GM12878 (cell line): ENCODE measurements at regions of chr11 and their contacts with region 1.

Region 1: GRCh38 chr11:4187055-4187988 is 92.7 kb downstream of the RRM1 start:
- DNase-seq: no peak
- ATAC-seq: peak; percentile 98
- H3K4me3 ChIP-seq: peak overlapping the region; percentile 64
- H3K27ac ChIP-seq: no peak overlapping the region
- H3K4me1 ChIP-seq: no peaks in the 10 kb centered on the region
- H3K27me3 ChIP-seq: no peaks in the 10 kb centered on the region; a peak in 1 of 4 replicates
- CTCF ChIP-seq: peak; percentile 72 to 91 (median 87)
- EP300 ChIP-seq: no peak
- POLR2A ChIP-seq: no peak
- RAD21 ChIP-seq: peak; percentile 88

Region 2: DNA sequence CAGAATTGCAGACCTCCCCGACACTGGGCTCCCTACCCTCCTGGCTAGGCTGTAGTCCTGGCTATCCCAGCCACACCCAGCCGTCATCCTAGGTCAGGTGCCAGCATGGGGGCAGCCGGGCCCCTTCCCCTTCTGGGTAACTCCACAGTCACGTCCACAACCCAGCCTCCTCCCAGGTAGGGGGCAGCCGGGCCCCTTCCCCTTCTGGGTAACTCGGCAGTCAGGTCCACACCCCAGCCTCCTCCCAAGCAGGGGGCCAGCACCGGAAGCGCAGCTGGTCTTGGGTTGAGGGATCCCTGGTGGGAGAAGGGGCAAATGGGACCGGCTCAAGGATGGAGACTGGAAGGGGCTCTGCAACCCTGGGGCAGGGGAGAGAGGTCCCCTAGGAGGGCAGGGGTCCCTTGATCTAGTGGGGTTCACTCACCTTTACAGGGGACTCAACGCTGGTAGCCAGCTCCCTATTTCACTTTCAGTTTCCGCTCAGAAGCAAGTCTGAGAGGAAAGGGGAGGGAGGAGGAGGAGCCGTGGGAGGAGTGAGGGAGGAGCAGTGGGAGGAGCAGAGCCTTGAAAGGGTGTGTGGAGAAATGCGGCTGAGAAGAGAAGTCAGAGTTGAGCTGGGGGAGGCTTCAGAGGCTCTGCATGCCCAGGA is 206.0 kb after region 1 on chr11 and contains the start of gene TRIM21:
- CTCF ChIA-PET with region 1: interaction called, 10 read pairs
- POLR2A ChIA-PET with region 1: no interaction called
- RAD21 ChIA-PET with region 1: interaction called, 6 read pairs
- SMC1A ChIA-PET with region 1: no interaction called
- in situ Hi-C with region 1: no loop called
- intact Hi-C with region 1: loop called (anchors 5 kb)
- DNase-seq: peak; percentile 72
- ATAC-seq: peak; percentile 99
- H3K4me3 ChIP-seq: peak within 1 kb of the TSS; percentile 87
- H3K27ac ChIP-seq: peak within 1 kb of the TSS; percentile 95
- H3K4me1 ChIP-seq: no peaks in the 10 kb centered on the region
- H3K27me3 ChIP-seq: no peaks in the 10 kb centered on the region
- CTCF ChIP-seq: no peak
- EP300 ChIP-seq: no peak
- POLR2A ChIP-seq: peak; percentile 82
- RAD21 ChIP-seq: no peak
- polyA plus RNA-seq, gene TRIM21: 24.7 to 28.6 TPM

Region 3: DNA sequence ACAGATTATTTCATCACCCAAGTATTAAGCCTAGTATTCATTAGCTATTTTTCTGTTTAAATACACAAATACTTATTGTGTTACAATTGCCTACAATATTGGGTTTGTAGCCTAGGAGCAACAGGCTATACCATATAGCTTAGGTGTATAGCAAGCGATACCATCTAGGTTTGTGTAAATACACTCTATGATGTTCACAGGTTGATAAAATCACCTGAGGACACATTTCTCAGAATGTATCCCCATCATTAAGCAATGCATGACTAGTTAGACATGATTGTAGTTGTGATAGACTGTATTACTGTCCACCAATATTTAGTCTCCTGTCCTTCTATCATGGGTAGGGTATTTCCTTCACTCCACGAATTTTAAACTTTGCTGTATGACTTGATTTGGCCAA is 303.5 kb after region 1 on chr11:
- CTCF ChIA-PET with region 1: interaction called, 91 read pairs
- POLR2A ChIA-PET with region 1: no interaction called
- RAD21 ChIA-PET with region 1: interaction called, 46 read pairs
- SMC1A ChIA-PET with region 1: interaction called, 30 read pairs
- in situ Hi-C with region 1: loop called (anchors 5 kb)
- intact Hi-C with region 1: loop called (anchors 1 kb)
- DNase-seq: no peak
- ATAC-seq: no peak
- H3K4me3 ChIP-seq: no peak overlapping the region
- H3K27ac ChIP-seq: no peak overlapping the region
- H3K4me1 ChIP-seq: no peaks in the 10 kb centered on the region; the same call in 1 of the 2 replicates
- H3K27me3 ChIP-seq: no peaks in the 10 kb centered on the region
- CTCF ChIP-seq: no peak
- EP300 ChIP-seq: no peak
- POLR2A ChIP-seq: no peak
- RAD21 ChIP-seq: no peak

Region 4: DNA sequence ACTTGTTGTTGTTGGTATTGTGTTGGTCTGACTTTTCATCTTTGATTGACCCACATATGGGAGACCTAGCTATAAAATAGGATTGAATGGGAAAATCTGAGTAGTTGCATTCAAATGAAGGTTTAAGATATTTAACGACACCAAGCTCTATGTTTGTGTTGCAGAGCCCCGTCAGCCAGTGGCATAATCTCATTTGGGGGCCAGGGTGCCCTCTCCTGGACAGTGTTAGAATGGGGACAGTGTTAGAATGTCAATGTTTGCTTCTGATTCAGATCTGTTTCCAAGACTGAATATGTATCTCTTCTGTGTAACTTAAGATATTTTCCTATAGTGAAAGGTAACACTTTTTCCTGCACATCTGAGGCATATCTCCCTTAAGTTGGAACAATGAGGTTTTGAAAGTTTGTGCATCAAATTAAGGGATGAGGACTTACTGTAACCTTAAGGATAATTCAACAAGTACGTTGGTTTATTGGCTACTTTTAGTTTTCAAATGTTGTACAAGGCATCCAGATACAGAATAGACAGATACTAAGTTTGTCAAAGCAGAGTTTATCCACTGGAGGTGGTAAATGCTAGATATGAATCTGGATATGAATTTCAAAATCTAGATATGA is 352.4 kb after region 1 on chr11:
- CTCF ChIA-PET with region 1: interaction called, 122 read pairs
- POLR2A ChIA-PET with region 1: no interaction called
- RAD21 ChIA-PET with region 1: interaction called, 18 read pairs
- SMC1A ChIA-PET with region 1: interaction called, 28 read pairs
- in situ Hi-C with region 1: loop called (anchors 5 kb)
- intact Hi-C with region 1: loop called (anchors 1 kb)
- DNase-seq: no peak
- ATAC-seq: peak; percentile 90
- H3K4me3 ChIP-seq: no peak overlapping the region
- H3K27ac ChIP-seq: no peak overlapping the region
- H3K4me1 ChIP-seq: no peaks in the 10 kb centered on the region
- H3K27me3 ChIP-seq: no peaks in the 10 kb centered on the region; a peak in 1 of 4 replicates
- CTCF ChIP-seq: peak; percentile 57 to 68 (median 64)
- EP300 ChIP-seq: no peak
- POLR2A ChIP-seq: no peak
- RAD21 ChIP-seq: peak; percentile 57

Region 5: GRCh38 chr11:4626207-4627099 is 439.1 kb after region 1 on chr11:
- CTCF ChIA-PET with region 1: interaction called, 13 read pairs
- POLR2A ChIA-PET with region 1: no interaction called
- RAD21 ChIA-PET with region 1: no interaction called
- SMC1A ChIA-PET with region 1: no interaction called
- in situ Hi-C with region 1: no loop called
- intact Hi-C with region 1: no loop called
- DNase-seq: no peak
- ATAC-seq: peak; percentile 86
- H3K4me3 ChIP-seq: no peak overlapping the region
- H3K27ac ChIP-seq: no peak overlapping the region
- H3K4me1 ChIP-seq: no peaks in the 10 kb centered on the region
- H3K27me3 ChIP-seq: no peaks in the 10 kb centered on the region
- CTCF ChIP-seq: peak; percentile 63 to 65 (median 65)
- EP300 ChIP-seq: no peak
- POLR2A ChIP-seq: no peak
- RAD21 ChIP-seq: peak; percentile 61

Region 6: DNA sequence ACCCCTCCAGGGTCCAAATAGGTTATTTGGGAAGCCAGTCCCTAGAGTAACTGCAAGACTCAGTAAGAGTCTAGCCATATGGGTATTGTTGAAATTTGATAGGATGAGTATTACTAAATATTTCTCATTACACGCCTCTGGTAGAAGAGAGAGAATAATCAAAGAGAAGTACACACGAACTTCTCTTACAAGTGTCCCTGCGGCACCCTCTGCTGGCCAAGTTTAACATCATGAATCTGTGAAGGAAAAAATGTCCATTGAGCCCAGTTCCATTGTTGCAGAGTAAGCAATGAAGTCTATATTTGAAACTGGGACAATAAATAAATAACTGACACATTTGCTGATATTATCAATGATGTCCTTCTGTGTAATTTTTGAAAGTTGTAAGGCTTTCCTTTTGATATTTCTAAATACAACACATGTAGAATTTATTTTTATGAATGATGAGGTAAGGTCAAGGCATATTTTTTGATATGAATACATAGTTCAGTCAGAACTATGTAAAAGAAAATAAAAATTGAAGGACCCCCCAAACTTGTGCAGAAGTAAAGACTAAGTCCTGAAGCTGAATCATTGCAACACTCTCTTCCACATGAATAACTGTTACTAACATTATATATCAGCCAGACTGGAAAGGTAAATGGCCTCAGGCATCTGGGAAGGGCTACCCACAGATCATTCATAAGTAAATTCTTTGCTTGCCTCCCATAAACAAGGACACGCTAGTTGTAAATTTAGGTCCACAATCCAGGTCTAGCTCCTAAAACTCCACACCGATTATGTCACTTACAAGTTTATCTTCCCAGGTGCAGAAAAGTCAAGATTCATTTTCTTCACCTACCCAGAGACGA is 817.3 kb after region 1 on chr11:
- CTCF ChIA-PET with region 1: interaction called, 3 read pairs
- POLR2A ChIA-PET with region 1: no interaction called
- RAD21 ChIA-PET with region 1: no interaction called
- SMC1A ChIA-PET with region 1: no interaction called
- in situ Hi-C with region 1: loop called (anchors 10 kb)
- intact Hi-C with region 1: loop called (anchors 5 kb)
- DNase-seq: no peak
- ATAC-seq: peak; percentile 70
- H3K4me3 ChIP-seq: no peak overlapping the region
- H3K27ac ChIP-seq: no peak overlapping the region
- H3K4me1 ChIP-seq: no peaks in the 10 kb centered on the region
- H3K27me3 ChIP-seq: no peaks in the 10 kb centered on the region; a peak in 1 of 4 replicates
- CTCF ChIP-seq: peak; percentile 57 to 59 (median 59); a peak in 4 of 6 replicates
- EP300 ChIP-seq: no peak
- POLR2A ChIP-seq: no peak
- RAD21 ChIP-seq: peak; percentile 64